ENCODE measurements at regions of chr16 and their contacts with region 1.

Region 1: DNA sequence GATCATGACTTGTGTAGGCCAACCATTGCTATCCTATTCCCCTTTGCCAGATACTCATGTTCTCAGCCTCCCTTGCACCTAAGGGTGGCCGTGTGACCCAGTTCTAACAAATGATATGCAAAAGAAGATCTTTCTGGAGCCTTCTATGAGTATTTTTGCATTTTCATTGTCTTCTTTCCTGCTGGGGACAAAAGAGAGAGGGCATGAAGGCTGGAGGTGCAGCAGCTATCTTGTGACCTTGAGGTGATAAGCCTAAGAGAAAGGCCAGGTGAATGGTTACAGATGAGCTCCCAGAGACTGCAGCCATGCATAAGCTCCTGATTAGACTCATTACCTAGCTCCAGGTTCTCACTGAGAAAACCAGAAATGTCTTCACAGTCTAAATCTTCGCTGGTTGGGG is 38.8 kb upstream of the PRKCB start:
- DNase-seq: no peak
- H3K4me3 ChIP-seq: no peak overlapping the region
- CTCF ChIP-seq: no peak

Region 2: DNA sequence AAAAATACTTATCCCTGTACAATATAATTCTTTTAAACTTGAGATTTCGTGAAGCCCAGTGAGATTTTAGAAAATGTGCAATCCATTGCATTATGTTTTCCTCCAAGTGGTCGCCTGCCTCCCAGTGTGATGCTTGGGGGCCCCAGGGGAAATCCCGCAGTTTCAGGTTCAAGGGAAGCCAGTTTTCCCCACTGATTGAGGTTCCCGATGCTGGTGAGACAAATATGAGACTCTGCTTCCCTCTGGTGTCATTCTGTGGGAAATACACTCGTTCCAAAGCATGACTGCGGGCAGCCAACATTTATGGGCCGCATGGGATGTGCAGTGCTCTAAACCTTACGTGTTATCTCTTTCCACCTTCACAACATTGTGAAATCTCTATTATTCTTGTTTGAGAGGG is 239.7 kb after region 1 on chr16:
- CTCF ChIA-PET with region 1: interaction called, 39 read pairs
- POLR2A ChIA-PET with region 1: no interaction called
- DNase-seq: no peak
- H3K4me3 ChIP-seq: no peak overlapping the region
- CTCF ChIP-seq: peak; percentile 75

Measured in AG04449 (cell line).